Activated T-helper 2 cell treated with anti-CD3 and anti-CD28 coated beads, Interferon-gamma antibody, Interleukin-2, Interleukin-4, amounts not matched to agents 10 μg/mL and 5 μg/mL and 100 μg/mL, durations not matched to agents 14 hours and 24 hours and 36 hours (primary cell): ENCODE measurements at regions of chr2 and their contacts with region 1.

Region 1: DNA sequence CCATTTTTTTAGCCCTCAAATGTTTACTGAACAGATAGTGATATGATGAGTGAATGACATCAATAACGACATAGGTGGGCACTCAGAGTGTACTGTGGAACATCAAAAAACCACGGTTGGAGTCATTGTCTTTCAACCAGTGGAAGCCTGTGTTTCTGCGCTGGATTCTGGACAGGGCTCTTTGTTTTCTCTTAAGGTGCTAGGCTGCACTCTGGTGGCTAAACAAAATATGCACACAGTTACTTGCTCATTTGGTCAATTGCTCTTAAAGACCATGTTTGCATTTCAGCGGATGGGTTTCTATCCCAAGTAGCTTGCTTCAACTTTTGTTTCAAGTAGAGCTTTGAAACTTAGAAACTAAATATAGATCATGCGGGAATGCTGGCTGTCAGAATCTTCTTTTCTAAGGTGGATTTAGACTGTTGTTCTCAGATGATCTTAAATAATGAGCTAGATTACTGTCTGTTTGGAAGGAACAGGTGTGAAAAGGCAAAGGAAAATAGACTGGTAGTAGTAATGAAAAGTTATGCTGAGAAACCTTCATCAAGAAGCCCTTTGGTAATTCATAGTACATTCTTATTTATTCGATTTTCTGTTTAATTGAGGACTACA is 48.5 kb upstream of the LYPD6B start:
- DNase-seq: peak; percentile 26
- H3K4me3 Mint-ChIP-seq: no peak overlapping the region
- H3K27ac Mint-ChIP-seq: no peak overlapping the region
- H3K4me1 Mint-ChIP-seq: peaks cover 1% of the 10 kb centered on the region
- H3K27me3 Mint-ChIP-seq: no peaks in the 10 kb centered on the region

Region 2: DNA sequence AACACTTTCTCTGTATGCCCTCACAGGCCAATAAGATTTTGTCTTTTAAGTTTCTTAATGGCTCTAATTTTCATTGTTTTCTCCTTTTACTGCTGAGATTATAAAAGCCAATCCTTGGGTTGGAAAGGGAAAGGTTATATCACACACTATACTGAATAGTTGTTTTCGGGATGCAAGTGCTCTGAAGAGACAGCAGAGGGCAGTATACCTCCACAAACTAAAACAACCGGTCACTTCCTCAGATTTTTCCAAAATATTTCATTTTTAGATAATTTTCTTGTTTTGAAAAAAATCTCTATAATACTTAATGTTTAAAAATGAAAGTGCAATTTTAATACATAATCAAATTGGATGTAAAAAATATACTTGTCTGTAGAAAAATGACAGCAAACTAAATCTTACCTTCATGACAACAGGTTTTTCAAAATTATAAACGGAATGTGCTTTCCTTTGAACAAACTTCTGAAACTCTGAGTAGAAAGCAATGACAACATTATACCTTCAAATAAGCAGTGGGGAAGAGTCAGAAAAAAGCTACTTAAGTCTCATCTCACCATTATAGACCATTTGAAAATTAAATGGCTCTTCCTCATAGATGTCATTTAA is 1052.1 kb before region 1 on chr2:
- intact Hi-C with region 1: loop called (anchors 1 kb)
- DNase-seq: no peak
- H3K4me3 Mint-ChIP-seq: no peak overlapping the region
- H3K27ac Mint-ChIP-seq: no peak overlapping the region
- H3K4me1 Mint-ChIP-seq: no peaks in the 10 kb centered on the region
- H3K27me3 Mint-ChIP-seq: no peaks in the 10 kb centered on the region

Region 3: GRCh38 chr2:148209603-148210002 is 780.4 kb before region 1 on chr2:
- intact Hi-C with region 1: loop called (anchors 10 kb)
- DNase-seq: no peak
- H3K4me3 Mint-ChIP-seq: no peak overlapping the region
- H3K27ac Mint-ChIP-seq: no peak overlapping the region
- H3K4me1 Mint-ChIP-seq: no peaks in the 10 kb centered on the region
- H3K27me3 Mint-ChIP-seq: no peaks in the 10 kb centered on the region